ENCODE measurements at regions of chr18 and their contacts with region 1.

Region 1: GRCh38 chr18:3062798-3063680 is 50.1 kb upstream of the LPIN2 start:
- DNase-seq: peak; percentile 63
- H3K4me3 ChIP-seq: no peak overlapping the region
- H3K27ac ChIP-seq: no peak overlapping the region
- H3K4me1 ChIP-seq: no peaks in the 10 kb centered on the region; a peak in 1 of 4 replicates
- H3K27me3 ChIP-seq: no peaks in the 10 kb centered on the region
- CTCF ChIP-seq: peak; percentile 75
- EP300 ChIP-seq: no peak
- RAD21 ChIP-seq: peak; percentile 71

Region 2: GRCh38 chr18:2948038-2948437 is 115.0 kb before region 1 on chr18:
- CTCF ChIA-PET with region 1: interaction called, 39 read pairs
- POLR2A ChIA-PET with region 1: no interaction called
- DNase-seq: peak; percentile 19
- H3K4me3 ChIP-seq: no peak overlapping the region
- H3K27ac ChIP-seq: no peak overlapping the region
- H3K4me1 ChIP-seq: no peaks in the 10 kb centered on the region; a peak in 1 of 4 replicates
- H3K27me3 ChIP-seq: no peaks in the 10 kb centered on the region
- CTCF ChIP-seq: peak; percentile 58
- EP300 ChIP-seq: no peak
- RAD21 ChIP-seq: peak; percentile 40

Region 3: DNA sequence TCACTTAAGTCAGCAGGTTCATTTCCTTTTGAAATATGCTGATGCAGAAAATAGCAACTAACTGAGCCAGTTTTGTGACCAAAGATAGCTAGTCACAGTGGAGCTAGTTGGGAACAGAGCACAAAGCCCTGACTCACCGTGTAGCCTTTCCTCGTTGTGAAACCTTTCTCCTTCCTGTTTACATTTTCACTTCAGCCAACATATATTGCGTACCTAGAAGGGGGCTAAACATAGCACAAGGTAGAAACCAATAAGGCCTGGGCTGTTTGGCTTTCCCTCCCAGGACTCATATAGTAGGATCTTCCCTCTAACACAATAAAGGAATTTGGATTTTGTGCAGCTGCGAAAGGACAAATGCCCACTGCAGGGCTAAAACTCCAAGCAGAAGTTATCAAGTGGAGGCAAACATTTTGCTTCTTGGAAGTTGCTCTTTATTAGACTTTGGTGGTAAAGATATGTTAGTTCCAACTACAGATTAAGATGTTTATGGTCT is 25.6 kb before region 1 on chr18:
- CTCF ChIA-PET with region 1: interaction called, 13 read pairs
- POLR2A ChIA-PET with region 1: no interaction called
- DNase-seq: no peak
- H3K4me3 ChIP-seq: no peak overlapping the region
- H3K27ac ChIP-seq: no peak overlapping the region
- H3K4me1 ChIP-seq: no peaks in the 10 kb centered on the region
- H3K27me3 ChIP-seq: no peaks in the 10 kb centered on the region
- CTCF ChIP-seq: no peak
- EP300 ChIP-seq: no peak
- RAD21 ChIP-seq: no peak

Region 4: GRCh38 chr18:3052411-3052758 is 10.7 kb before region 1 on chr18:
- CTCF ChIA-PET with region 1: interaction called, 18 read pairs
- POLR2A ChIA-PET with region 1: no interaction called
- DNase-seq: no peak
- H3K4me3 ChIP-seq: no peak overlapping the region
- H3K27ac ChIP-seq: no peak overlapping the region
- H3K4me1 ChIP-seq: peaks cover 0 to 3% of the 10 kb centered on the region in 2 experiments; a peak in 1 of 4 replicates
- H3K27me3 ChIP-seq: no peaks in the 10 kb centered on the region
- CTCF ChIP-seq: no peak
- EP300 ChIP-seq: no peak
- RAD21 ChIP-seq: no peak

Region 5: DNA sequence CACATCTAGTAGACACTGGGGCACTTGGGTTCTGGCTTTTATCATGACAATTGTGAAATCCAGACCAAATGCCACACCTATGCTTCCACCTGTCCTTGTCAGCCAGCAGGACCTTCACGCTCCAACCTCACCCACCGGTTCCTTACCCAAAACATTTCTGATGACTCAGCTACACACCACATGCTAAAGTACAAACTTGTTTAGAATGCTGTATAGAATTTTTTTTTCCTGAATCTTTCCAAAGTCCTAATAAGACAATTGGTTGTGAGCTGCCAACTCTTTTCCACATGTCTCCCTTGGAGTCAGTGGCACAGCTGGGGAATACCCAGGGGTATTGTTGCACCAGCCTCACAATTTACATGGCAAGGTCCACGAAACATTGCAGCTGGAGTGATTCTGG is 25.4 kb after region 1 on chr18:
- CTCF ChIA-PET with region 1: interaction called, 16 read pairs
- POLR2A ChIA-PET with region 1: no interaction called
- DNase-seq: no peak
- H3K4me3 ChIP-seq: no peak overlapping the region
- H3K27ac ChIP-seq: no peak overlapping the region
- H3K4me1 ChIP-seq: peaks cover 0 to 8% of the 10 kb centered on the region in 2 experiments
- H3K27me3 ChIP-seq: no peaks in the 10 kb centered on the region
- CTCF ChIP-seq: no peak
- EP300 ChIP-seq: no peak
- RAD21 ChIP-seq: no peak